H1 (cell line): ENCODE measurements at regions of chr17 and their contacts with region 1.

Region 1: DNA sequence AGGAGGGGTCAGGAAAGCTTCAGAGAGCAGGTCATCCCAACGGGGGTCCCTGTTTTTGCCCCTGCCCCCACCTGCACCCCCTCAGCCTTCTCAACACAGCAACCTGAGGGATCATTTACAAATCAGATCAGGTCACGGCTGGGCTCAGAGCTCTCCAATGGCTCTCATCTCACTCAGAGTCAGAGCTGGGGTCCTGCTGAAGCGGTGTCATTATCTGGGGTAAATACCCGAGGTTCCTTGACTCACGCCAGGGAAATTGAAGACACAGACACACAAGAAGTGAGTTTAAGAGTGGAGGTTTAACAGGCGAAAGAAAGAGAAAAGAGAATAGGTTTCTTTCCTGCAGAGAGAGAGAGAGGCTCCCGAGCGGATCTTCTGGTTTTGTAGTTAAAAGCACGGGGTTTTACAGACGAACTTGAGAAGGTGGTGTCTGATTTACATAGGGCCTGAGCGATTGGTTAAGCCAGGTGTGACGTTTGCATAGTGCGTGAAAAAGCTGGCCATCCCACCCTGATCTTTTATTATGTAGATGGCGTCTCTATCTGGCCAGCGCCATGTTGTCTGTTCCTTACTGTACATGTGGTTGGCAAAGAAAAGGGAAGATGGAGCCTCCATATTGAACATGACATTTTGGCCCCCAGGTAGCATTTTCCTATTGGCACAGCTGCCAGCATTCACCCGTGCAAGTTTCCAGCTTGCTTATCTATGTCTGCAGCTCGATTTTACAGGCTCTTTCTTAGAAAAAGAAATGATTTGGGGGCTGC is 51.4 kb downstream of the WSB1 start:
- DNase-seq: peak; percentile 74 to 81
- H3K4me3 ChIP-seq: peak overlapping the region; percentile 28 to 62 (median 41); a peak in 6 of 8 replicates
- H3K27ac ChIP-seq: peak overlapping the region; percentile 95
- H3K4me1 ChIP-seq: peaks cover 8 to 16% (median 12%) of the 10 kb centered on the region in 4 experiments
- H3K27me3 ChIP-seq: no peaks in the 10 kb centered on the region
- CTCF ChIP-seq: no peak
- EP300 ChIP-seq: peak in 1 of 2 experiments; percentile 67; a peak in 1 of 3 replicates
- POLR2A ChIP-seq: peak; percentile 66 to 94
- RAD21 ChIP-seq: peak in 1 of 2 experiments; percentile 8; a peak in 1 of 4 replicates

Region 2: GRCh38 chr17:27332485-27333409 is 12.6 kb before region 1 on chr17:
- CTCF ChIA-PET with region 1: interaction called, 17 read pairs
- POLR2A ChIA-PET with region 1: interaction called, 13 read pairs
- DNase-seq: peak; percentile 89 to 95
- H3K4me3 ChIP-seq: peak overlapping the region; percentile 14 to 66 (median 56)
- H3K27ac ChIP-seq: peak overlapping the region; percentile 24; the same call in 1 of the 2 replicates
- H3K4me1 ChIP-seq: peaks cover 0 to 6% (median 5%) of the 10 kb centered on the region in 4 experiments; a peak in 6 of 7 replicates
- H3K27me3 ChIP-seq: no peaks in the 10 kb centered on the region; a peak in 1 of 7 replicates
- CTCF ChIP-seq: peak; percentile 65 to 81 (median 75)
- EP300 ChIP-seq: peak in 1 of 2 experiments; percentile 9; a peak in 1 of 3 replicates
- POLR2A ChIP-seq: peak in 1 of 2 experiments; percentile 55; a peak in 2 of 3 replicates
- RAD21 ChIP-seq: peak; percentile 86 to 92

Region 3: DNA sequence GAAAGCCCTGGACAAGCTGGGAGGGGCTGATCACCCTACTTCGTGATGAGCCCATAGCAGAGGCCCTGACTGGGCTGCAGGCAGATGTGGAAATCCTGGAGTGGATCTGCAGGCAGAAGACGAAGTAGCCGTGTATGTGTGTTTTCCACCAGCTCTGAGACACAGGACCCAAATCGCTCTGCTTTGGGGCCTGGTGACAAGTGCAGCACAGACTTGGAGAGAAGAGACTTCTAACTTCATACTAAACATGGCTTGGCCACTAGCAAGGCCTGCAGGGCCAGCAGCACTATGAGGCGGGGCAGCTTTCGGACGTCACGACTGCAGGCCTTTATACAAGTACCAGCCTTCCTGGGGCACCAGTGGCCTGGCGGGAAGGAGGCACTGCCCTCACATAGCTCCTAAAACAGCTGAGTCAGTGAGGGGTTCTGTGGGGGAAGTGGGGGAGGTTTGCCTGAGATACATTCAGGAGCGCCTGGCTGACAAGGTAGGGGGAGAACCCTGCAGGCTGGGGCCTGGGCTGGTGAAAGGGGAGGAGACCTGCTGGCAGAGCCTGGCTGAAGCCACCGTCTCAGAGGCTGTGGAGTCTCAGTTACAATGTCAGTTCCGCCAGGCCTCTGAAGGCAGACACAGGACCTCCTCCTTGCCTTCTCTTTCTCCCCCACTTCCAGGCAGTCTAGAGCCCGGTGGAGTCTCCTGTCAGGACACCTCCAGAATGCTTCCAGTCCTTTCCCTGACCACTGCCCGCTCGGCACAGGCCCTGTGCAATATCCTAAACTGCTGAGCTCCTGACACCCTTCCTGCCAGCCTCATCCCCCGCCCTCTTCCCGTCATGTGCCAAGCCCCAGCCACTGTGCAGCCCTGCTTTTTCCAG is 22.0 kb after region 1 on chr17:
- CTCF ChIA-PET with region 1: no interaction called
- POLR2A ChIA-PET with region 1: no interaction called
- DNase-seq: no peak
- H3K4me3 ChIP-seq: no peak overlapping the region
- H3K27ac ChIP-seq: no peak overlapping the region
- H3K4me1 ChIP-seq: no peaks in the 10 kb centered on the region; a peak in 2 of 7 replicates
- H3K27me3 ChIP-seq: no peaks in the 10 kb centered on the region
- CTCF ChIP-seq: no peak
- EP300 ChIP-seq: no peak
- POLR2A ChIP-seq: no peak
- RAD21 ChIP-seq: no peak